K562 (cell line): ENCODE measurements at regions of chr10 and their contacts with region 1.

Region 1: GRCh38 chr10:17454161-17455014 is at the start of gene ST8SIA6:
- DNase-seq: peak; percentile 69 to 77 (median 70)
- ATAC-seq: peak; percentile 49
- H3K4me3 ChIP-seq: peak within 1 kb of the TSS; percentile 77
- H3K27ac ChIP-seq: peak within 1 kb of the TSS; percentile 91
- H3K4me1 ChIP-seq: peaks cover 22 to 41% of the 10 kb centered on the region in 2 experiments
- H3K27me3 ChIP-seq: no peaks in the 10 kb centered on the region
- CTCF ChIP-seq: peak in 2 of 3 experiments; percentile 17 to 37; a peak in 3 of 6 replicates
- EP300 ChIP-seq: 0 out of 2 replicates have a peak, but pooled peaks have one; percentile 1
- POLR2A ChIP-seq: no peak
- RAD21 ChIP-seq: 0 out of 4 replicates have a peak, but pooled peaks of 1 of the 2 experiments have one; percentile 6
- polyA plus RNA-seq, gene ST8SIA6: 0.69 to 1.2 TPM

Region 2: DNA sequence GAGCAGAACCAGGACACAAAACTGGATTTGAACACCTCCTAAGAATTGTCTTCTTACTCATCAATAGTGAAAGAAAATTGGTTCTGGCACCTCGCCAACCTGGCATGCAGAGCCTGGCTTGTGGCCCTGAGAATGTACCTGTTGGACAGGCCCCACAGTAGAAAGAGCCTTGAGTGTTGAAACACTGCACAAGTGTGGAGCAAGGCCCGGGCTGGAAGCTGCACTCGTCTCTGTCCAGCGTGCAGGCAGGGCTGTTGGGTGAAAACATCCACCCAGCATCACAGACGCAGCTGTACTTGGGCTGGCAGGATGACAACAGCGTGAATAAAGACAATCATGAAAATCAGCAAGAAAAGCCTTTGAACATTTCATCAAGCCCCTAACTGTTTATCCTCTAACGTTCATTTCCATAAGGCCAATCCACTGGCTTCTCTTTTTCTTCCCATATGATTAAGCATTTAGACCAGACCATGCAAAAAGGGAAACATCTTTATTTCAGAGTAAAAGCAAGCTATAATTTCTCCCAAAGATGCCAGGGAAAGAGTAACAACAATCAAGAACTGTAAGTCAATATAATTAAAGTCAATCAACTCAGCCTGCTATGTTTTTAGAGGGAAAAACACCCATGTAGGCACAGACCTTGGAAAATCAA is 340.4 kb before region 1 on chr10:
- CTCF ChIA-PET with region 1: no interaction called
- POLR2A ChIA-PET with region 1: no interaction called
- in situ Hi-C with region 1: no loop called
- intact Hi-C with region 1: no loop called
- DNase-seq: no peak
- ATAC-seq: no peak
- H3K4me3 ChIP-seq: no peak overlapping the region
- H3K27ac ChIP-seq: no peak overlapping the region
- H3K4me1 ChIP-seq: no peaks in the 10 kb centered on the region
- H3K27me3 ChIP-seq: peaks cover 0 to 5% of the 10 kb centered on the region in 2 experiments; a peak in 1 of 5 replicates
- CTCF ChIP-seq: no peak
- EP300 ChIP-seq: no peak
- POLR2A ChIP-seq: no peak
- RAD21 ChIP-seq: no peak

Region 3: GRCh38 chr10:17409170-17409733 is 45.1 kb before region 1 on chr10:
- CTCF ChIA-PET with region 1: no interaction called
- POLR2A ChIA-PET with region 1: no interaction called
- in situ Hi-C with region 1: no loop called
- intact Hi-C with region 1: no loop called
- DNase-seq: peak in 2 of 4 experiments; percentile 34 to 62
- ATAC-seq: peak; percentile 67
- H3K4me3 ChIP-seq: no peak overlapping the region
- H3K27ac ChIP-seq: no peak overlapping the region
- H3K4me1 ChIP-seq: peaks cover 14 to 29% of the 10 kb centered on the region in 2 experiments; a peak in 4 of 5 replicates
- H3K27me3 ChIP-seq: no peaks in the 10 kb centered on the region
- CTCF ChIP-seq: peak; percentile 47 to 67 (median 50); a peak in 5 of 6 replicates
- EP300 ChIP-seq: no peak
- POLR2A ChIP-seq: no peak
- RAD21 ChIP-seq: peak; percentile 63 to 79

Region 4: DNA sequence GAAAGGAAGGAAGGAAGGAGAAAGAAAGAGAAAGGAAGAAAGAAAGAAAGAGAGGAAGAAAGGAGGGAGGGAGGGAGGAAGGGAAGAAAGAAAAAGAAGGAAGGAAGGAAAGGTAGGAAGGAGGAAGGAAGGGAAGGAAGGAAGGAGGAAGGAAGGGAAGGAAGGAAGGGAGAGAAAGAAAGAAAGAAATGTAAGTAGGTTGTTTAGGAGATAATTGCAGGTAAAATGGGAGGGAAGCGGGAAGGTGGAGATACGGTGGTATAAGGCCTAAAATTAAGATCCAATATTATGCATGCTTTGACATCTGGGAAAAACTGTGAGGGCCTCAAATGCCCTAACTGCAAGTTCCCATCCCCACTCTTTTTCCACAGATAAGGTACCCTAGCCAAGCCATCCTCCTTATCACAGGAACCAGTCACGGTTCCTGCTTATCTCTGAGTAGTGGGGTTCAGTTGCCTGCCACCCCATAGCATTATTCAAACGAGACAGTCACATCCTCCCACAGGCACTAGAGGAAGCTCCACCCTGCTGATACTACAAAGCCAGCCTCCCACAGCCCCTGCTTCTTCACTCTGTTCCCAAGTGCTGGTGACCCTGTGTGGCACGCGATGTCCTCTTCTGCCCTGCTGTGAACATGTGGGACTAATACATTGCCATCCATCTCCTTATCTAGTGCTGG is 28.7 kb before region 1 on chr10:
- CTCF ChIA-PET with region 1: no interaction called
- POLR2A ChIA-PET with region 1: interaction called, 13 read pairs
- in situ Hi-C with region 1: no loop called
- intact Hi-C with region 1: loop called (anchors 1 kb)
- DNase-seq: peak; percentile 89 to 97 (median 91)
- ATAC-seq: peak; percentile 88
- H3K4me3 ChIP-seq: no peak overlapping the region
- H3K27ac ChIP-seq: peak overlapping the region; percentile 90
- H3K4me1 ChIP-seq: peaks cover 44 to 75% of the 10 kb centered on the region in 2 experiments
- H3K27me3 ChIP-seq: no peaks in the 10 kb centered on the region
- CTCF ChIP-seq: no peak
- EP300 ChIP-seq: peak; percentile 100
- POLR2A ChIP-seq: peak; percentile 84
- RAD21 ChIP-seq: peak; percentile 30 to 35

Region 5: DNA sequence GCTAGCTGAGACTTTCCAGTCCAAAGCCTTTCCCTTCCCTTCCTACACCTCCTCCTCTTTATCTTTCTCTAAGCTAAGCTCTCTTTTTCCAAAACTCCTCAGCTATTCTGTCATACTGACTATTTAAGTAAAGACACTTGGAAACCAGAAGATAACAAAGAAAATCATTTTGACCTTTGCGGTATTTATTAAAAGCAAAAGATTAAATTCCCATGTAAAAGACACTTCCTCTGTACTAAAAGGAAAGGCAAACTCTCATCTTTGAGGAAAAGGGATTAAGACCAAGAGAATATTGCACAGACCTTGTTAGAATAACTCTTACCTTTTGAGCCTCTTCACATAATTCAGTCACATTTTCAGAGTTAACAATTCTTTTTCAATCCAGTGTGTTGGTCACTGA is 15.8 kb before region 1 on chr10:
- CTCF ChIA-PET with region 1: no interaction called
- POLR2A ChIA-PET with region 1: interaction called, 29 read pairs
- in situ Hi-C with region 1: no loop called
- intact Hi-C with region 1: no loop called
- DNase-seq: no peak
- ATAC-seq: no peak
- H3K4me3 ChIP-seq: no peak overlapping the region
- H3K27ac ChIP-seq: peak overlapping the region; percentile 3; the same call in 2 of the 3 replicates
- H3K4me1 ChIP-seq: peaks cover 6 to 31% of the 10 kb centered on the region in 2 experiments; a peak in 4 of 5 replicates
- H3K27me3 ChIP-seq: no peaks in the 10 kb centered on the region
- CTCF ChIP-seq: no peak
- EP300 ChIP-seq: no peak
- POLR2A ChIP-seq: no peak
- RAD21 ChIP-seq: no peak

Region 6: DNA sequence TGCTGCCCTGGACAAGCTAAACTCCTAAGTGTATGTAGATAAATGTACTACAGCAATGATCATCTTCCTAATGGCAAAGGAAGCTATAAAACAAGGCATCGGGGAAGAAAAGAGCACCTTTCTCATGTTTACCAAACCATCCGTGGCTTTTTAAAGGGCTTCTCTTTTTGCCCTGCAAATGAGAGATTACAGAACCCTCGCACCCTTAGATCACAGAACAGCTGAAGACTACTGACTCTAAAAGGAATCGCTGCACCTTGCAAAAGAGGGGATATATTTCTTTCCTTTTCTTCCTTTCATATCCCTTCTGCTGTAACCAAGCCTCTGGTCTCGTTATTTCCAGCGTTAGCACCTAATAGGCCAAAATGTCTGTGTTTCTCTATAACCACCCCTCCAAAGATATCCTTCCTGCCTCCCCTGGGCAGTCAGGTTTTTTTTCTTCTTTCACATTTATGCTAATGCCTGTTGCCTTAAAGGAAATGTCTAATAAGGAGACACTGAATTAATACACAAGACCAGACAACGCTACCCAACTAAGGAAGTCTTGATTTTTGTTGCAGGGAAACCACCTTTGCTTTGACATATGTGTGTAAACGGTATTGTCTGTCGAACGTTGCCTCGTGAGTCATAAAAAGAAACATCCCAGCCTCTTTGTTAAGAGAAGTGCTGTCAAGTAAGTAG is 10.5 kb before region 1 on chr10:
- CTCF ChIA-PET with region 1: no interaction called
- POLR2A ChIA-PET with region 1: interaction called, 29 read pairs
- in situ Hi-C with region 1: no loop called
- intact Hi-C with region 1: no loop called
- DNase-seq: no peak
- ATAC-seq: peak; percentile 15
- H3K4me3 ChIP-seq: no peak overlapping the region
- H3K27ac ChIP-seq: peak overlapping the region; percentile 26; the same call in 2 of the 3 replicates
- H3K4me1 ChIP-seq: peaks cover 7 to 31% of the 10 kb centered on the region in 2 experiments; a peak in 3 of 5 replicates
- H3K27me3 ChIP-seq: no peaks in the 10 kb centered on the region
- CTCF ChIP-seq: no peak
- EP300 ChIP-seq: no peak
- POLR2A ChIP-seq: peak; percentile 54
- RAD21 ChIP-seq: no peak